ENCODE measurements at regions of chr17 and their contacts with region 1.

Region 1: DNA sequence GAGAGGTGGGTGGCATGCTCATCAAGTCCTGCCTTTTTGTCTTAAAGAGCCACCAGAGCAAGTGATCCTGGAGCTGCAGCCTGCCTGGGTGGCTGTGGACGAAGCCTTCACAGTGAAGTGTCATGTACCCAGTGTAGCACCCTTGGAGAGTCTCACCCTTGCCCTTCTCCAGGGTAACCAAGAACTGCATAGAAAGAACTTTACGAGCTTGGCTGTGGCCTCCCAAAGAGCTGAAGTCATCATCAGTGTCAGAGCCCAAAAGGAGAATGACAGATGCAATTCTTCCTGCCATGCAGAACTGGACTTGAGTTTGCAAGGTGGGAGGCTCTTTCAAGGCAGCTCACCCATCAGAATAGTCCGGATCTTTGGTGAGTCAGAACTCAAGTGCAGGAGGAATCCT is 14.2 kb downstream of the CSH2 start:
- DNase-seq: no peak
- ATAC-seq: no peak
- H3K4me3 ChIP-seq: no peak overlapping the region
- H3K27ac ChIP-seq: no peak overlapping the region
- H3K4me1 ChIP-seq: no peaks in the 10 kb centered on the region
- CTCF ChIP-seq: no peak
- EP300 ChIP-seq: no peak
- POLR2A ChIP-seq: no peak
- RAD21 ChIP-seq: no peak

Region 2: GRCh38 chr17:63842540-63843386 is 16.5 kb before region 1 on chr17 and contains the start of gene SMARCD2:
- CTCF ChIA-PET with region 1: interaction called, 91 read pairs
- POLR2A ChIA-PET with region 1: interaction called, 3 read pairs
- DNase-seq: peak; percentile 90 to 100
- ATAC-seq: peak; percentile 80 to 90
- H3K4me3 ChIP-seq: peak within 1 kb of the TSS; percentile 89
- H3K27ac ChIP-seq: peak within 1 kb of the TSS; percentile 94 to 97
- H3K4me1 ChIP-seq: peaks cover 32% of the 10 kb centered on the region
- CTCF ChIP-seq: no peak
- EP300 ChIP-seq: peak in 1 of 2 experiments; percentile 18; a peak in 1 of 5 replicates
- POLR2A ChIP-seq: peak; percentile 36; the same call in 1 of the 2 replicates
- RAD21 ChIP-seq: no peak
- polyA plus RNA-seq, gene SMARCD2: 52.7 and 61.9 TPM in 2 replicates

Region 3: GRCh38 chr17:63848834-63849700 is 10.2 kb before region 1 on chr17:
- CTCF ChIA-PET with region 1: interaction called, 91 read pairs
- POLR2A ChIA-PET with region 1: no interaction called
- DNase-seq: peak; percentile 99
- ATAC-seq: peak; percentile 94 to 96
- H3K4me3 ChIP-seq: peak overlapping the region; percentile 28
- H3K27ac ChIP-seq: peak overlapping the region; percentile 74 to 86
- H3K4me1 ChIP-seq: no peaks in the 10 kb centered on the region
- CTCF ChIP-seq: peak; percentile 88
- EP300 ChIP-seq: no peak
- POLR2A ChIP-seq: no peak
- RAD21 ChIP-seq: no peak

Region 4: DNA sequence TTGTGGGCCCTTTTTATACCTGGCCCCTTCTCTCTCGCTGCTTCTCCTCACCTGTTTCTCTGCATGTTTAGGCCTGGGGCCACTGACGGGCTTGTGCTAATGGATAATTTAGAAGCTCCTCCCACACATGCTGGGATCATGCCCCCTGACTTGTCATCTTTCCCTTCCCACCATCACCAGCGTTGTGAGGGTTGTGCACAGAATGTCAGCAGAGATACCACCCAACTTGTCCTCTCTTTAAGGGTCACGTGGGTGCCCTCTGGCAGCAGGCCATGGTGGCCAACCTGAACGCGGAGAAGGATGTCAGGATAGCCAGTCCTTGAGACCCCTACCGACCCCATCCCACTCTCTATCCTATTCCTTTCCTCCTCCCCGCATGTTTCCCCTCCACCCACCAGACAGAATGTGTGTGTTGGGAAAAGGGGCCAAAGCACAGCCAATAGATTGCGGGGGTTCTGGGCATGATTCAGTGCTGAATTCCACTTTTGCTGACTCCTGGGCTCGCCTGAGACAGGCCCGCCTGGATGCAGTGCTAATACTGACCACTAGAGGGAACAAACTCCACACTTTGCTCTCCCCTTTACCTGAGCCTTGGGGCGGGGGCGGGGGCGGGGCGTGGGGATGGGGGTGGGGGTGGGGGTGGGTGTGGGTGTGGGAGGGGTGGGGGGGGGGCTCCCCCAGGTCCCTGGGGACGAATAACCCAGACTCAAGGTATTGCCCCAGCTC is 22.8 kb after region 1 on chr17 and contains the start of gene GH2:
- CTCF ChIA-PET with region 1: interaction called, 44 read pairs
- POLR2A ChIA-PET with region 1: no interaction called
- DNase-seq: peak; percentile 65 to 91
- ATAC-seq: peak; percentile 69 to 93; a peak in 5 of 6 replicates
- H3K4me3 ChIP-seq: no peak within 1 kb of the TSS
- H3K27ac ChIP-seq: no peak within 1 kb of the TSS
- H3K4me1 ChIP-seq: no peaks in the 10 kb centered on the region
- CTCF ChIP-seq: peak; percentile 36; the same call in 2 of the 3 replicates
- EP300 ChIP-seq: no peak
- POLR2A ChIP-seq: no peak
- RAD21 ChIP-seq: 0 out of 5 replicates have a peak, but pooled peaks of 1 of the 2 experiments have one; percentile 20
- polyA plus RNA-seq, gene GH2: not detected in 2 replicates

Region 5: DNA sequence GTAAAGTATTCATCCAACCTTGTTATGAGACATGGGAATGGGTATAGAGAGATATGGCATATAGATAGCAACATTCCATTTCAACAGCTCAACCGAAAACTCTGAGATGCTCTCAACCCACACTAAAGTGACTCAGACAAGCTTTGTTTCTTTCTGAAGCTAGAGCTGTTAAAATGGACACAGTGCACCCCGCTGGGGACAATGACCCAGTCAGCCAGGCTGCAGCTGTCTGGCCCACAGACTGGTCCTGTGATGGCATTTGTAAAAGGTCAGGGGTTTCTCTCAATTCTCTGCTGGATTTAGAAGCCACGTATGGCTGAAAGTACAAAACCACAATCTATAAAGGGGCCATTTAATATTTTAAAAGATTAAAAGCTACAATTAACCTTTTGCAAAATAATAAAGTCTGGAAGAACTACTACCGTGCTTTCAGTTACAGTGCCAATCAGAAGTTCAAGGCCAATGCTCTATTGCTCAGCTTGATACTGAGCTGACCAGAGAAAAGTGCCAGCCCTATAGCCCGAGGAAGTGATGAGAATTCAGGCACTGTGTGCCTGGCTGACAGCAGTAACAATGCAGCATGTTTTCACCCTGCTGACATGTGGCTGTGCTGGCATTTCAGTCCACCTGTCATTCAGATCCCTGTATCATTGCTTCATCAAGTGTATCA is 343.6 kb after region 1 on chr17:
- CTCF ChIA-PET with region 1: no interaction called
- POLR2A ChIA-PET with region 1: no interaction called
- DNase-seq: no peak
- ATAC-seq: 0 out of 6 replicates have a peak, but pooled peaks have one; percentile 23 to 31
- H3K4me3 ChIP-seq: no peak overlapping the region
- H3K27ac ChIP-seq: no peak overlapping the region
- H3K4me1 ChIP-seq: peaks cover 11% of the 10 kb centered on the region; the same call in 2 of the 3 replicates
- CTCF ChIP-seq: no peak
- EP300 ChIP-seq: no peak
- POLR2A ChIP-seq: no peak
- RAD21 ChIP-seq: no peak

Measured in A549 (cell line).